Thyroid gland (tissue), 4 donors: ENCODE measurements at regions of chr17 and their contacts with region 1.

Region 1: DNA sequence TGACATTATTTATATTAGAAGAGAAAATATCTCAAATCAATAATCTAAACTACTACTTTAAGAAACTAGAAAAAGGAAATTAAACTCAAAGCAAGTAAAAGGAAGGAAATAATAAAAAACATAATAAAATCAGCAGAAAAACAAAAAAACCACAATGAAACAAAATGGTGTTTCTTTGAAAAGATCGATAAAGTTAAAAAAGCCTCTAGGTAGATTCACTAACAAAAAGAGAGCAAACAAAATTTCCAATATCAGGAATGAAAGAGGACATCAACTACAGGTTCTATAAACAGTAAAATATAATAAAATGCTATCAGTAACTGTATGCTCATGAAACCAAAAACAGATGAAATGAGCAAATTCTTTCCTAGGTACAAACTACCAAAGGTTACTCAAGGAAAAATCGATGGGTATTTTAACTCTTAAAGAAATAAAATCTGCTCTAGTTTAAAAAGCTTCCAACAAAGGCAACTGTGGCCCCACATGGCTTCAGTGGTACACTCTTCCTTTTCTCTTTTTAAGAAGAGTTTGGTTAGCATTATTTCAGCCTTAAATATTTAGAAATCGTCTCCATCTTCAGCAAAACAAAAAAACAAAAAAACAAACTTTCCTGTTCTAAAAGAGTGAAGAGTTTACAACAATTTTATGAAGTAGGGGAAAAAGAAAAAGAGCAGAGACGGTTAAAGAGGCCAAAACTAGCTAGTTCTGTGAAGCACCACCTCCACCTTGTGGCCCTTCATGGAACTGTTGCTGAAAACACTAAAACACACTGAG is 102.2 kb downstream of the TRIM37 start:
- DNase-seq: peak; percentile 58 to 66
- H3K4me3 ChIP-seq: no peak overlapping the region
- H3K27ac ChIP-seq: no peak overlapping the region
- H3K4me1 ChIP-seq: peaks cover 3 to 7% of the 10 kb centered on the region in 2 donors
- H3K27me3 ChIP-seq: no peaks in the 10 kb centered on the region
- CTCF ChIP-seq: peak; percentile 81 to 98 (median 92)
- POLR2A ChIP-seq: no peak

Region 2: GRCh38 chr17:58587702-58588254 is 416.7 kb before region 1 on chr17:
- intact Hi-C with region 1: loop called (anchors 5 kb)
- DNase-seq: peak; percentile 43 to 47
- H3K4me3 ChIP-seq: no peak overlapping the region
- H3K27ac ChIP-seq: no peak overlapping the region
- H3K4me1 ChIP-seq: no peaks in the 10 kb centered on the region
- H3K27me3 ChIP-seq: no peaks in the 10 kb centered on the region
- CTCF ChIP-seq: peak; percentile 57 to 96 (median 74)
- POLR2A ChIP-seq: no peak

Region 3: GRCh38 chr17:58710936-58711775 is 293.4 kb before region 1 on chr17:
- intact Hi-C with region 1: loop called (anchors 5 kb)
- DNase-seq: peak; percentile 33 to 35
- H3K4me3 ChIP-seq: no peak overlapping the region
- H3K27ac ChIP-seq: no peak overlapping the region
- H3K4me1 ChIP-seq: no peaks in the 10 kb centered on the region
- H3K27me3 ChIP-seq: no peaks in the 10 kb centered on the region
- CTCF ChIP-seq: peak; percentile 33 to 82 (median 68)
- POLR2A ChIP-seq: no peak